ENCODE measurements at regions of chr12 and their contacts with region 1.

Region 1: DNA sequence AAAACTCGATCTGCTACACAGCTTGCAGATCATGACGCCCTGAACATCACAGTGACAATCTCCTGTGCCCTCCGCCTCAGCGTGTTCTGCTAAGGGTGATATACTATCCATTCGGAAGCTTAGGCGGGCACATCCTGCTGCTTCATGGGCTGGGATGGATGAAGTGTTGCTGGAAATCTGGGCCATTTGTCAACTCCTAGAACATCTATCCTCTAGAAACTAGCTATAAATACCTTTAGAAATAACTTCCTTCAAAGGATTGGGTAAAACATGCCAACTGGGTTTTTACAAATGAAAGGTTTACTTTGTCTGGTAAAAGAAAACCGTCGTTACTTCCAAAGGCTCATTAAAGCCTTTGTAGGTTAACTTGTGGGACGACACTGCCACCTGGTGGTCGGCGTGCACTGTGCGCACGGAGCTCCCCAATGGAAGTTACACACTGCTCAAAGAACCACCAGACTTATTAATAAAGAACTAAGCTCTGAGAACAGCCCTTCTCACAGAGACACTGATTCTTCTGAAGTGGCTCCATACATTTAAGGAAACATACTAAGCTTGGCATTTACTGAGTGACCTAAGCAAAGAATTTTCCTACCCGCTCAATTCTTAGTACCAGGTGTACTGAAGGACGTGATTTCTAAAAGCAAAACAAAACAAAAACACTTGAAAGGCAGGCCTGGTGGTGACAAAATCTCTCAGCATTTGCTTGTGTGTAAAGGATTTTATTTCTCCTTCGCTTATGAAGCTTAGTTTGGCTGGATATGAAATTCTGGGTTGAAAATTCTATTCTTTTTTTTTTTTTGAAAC is 21.6 kb upstream of the CACNA2D4 start:
- DNase-seq: peak; percentile 78
- ATAC-seq: peak; percentile 83
- H3K4me3 ChIP-seq: no peak overlapping the region
- H3K27ac ChIP-seq: no peak overlapping the region
- H3K4me1 ChIP-seq: peaks cover 12% of the 10 kb centered on the region
- H3K27me3 ChIP-seq: no peaks in the 10 kb centered on the region
- CTCF ChIP-seq: peak; percentile 97
- POLR2A ChIP-seq: no peak
- RAD21 ChIP-seq: peak; percentile 93

Region 2: DNA sequence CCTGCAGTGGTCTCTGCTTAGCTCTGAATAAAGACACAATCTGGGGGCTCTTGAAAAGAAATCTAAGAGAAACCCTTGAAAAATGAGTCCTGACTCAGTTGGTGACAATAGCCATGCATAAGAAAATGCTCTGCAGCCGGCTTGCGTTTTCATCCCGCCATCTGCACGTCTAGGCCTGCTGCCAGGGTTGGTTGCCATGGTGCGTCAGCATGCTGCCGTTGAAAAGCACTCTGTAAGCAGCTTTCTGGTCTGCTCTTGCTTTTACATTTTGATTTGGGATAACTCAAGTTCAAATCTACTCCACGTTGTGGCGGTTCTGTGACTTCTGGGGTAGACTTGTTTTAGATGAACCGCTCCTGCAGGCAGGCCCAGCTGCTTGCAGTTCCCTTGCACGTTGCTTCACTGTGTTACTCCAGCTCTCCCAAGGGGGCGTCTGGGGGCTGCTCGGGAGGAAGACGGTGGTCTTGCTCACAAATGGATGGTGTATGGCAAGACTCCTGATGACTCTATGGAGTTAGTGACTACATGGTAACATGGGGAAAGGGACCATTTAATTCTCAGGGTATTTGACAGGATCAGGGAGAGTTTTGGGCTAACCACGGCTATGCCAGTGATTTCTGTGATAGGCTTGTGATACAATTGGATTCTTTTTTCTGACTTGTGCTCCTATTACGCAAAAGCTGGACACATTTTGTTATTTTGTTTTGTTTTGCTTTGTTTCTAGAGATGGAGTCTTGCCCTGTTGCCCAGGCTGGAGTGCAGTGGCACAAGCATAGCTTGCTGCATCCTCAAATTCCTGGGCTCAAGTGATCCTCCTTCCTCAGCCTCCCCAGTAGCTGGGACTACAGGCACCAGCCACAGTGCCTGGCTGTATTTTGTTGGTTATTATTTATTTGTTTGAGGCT is 295.2 kb before region 1 on chr12:
- CTCF ChIA-PET with region 1: no interaction called
- POLR2A ChIA-PET with region 1: no interaction called
- dilution Hi-C with region 1: no loop called
- in situ Hi-C with region 1: loop called (anchors 5 kb)
- intact Hi-C with region 1: no loop called
- DNase-seq: peak; percentile 91
- ATAC-seq: peak; percentile 82
- H3K4me3 ChIP-seq: no peak overlapping the region
- H3K27ac ChIP-seq: no peak overlapping the region
- H3K4me1 ChIP-seq: peaks cover 10% of the 10 kb centered on the region
- H3K27me3 ChIP-seq: no peaks in the 10 kb centered on the region
- CTCF ChIP-seq: no peak
- POLR2A ChIP-seq: no peak
- RAD21 ChIP-seq: no peak

Region 3: DNA sequence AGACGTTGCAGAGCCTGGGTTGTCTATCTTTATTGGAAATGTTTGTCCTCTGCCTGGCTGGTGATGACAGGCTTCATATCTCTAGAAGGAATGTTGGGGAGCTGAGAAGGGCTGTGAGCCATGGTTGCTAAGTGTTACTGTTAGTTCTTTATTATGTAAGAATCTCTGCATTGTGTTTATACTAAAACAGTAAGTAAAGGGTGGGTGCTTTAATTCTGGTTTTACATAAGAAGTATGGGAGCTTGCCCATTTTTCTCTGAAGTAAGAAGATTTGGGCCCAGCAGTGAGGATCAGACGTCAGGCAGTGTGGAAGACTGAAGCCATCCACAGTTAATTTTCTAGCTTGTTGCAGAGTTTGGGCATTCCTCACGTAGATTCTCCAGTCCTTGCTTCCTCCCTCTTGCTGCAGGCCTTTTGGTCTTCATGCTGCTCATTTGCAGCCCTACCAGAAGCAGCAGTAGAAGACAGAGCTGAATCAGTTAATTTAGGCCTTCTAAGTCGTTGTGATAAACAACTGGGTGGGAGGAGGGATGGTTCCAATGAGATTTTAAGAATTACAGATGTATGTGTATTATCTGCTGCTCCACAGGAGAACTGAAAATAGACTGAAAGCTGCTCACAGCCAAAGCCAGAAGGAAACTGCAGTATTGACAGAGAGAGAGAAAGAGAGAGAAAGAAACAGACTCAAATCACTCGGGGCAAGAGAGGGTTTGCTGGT is 289.6 kb before region 1 on chr12:
- CTCF ChIA-PET with region 1: interaction called, 9 read pairs
- POLR2A ChIA-PET with region 1: no interaction called
- dilution Hi-C with region 1: no loop called
- in situ Hi-C with region 1: loop called (anchors 5 kb)
- intact Hi-C with region 1: loop called (anchors 2 kb)
- DNase-seq: peak; percentile 20
- ATAC-seq: peak; percentile 45; the same call in 1 of the 2 replicates
- H3K4me3 ChIP-seq: no peak overlapping the region
- H3K27ac ChIP-seq: no peak overlapping the region
- H3K4me1 ChIP-seq: peaks cover 4% of the 10 kb centered on the region
- H3K27me3 ChIP-seq: no peaks in the 10 kb centered on the region
- CTCF ChIP-seq: no peak
- POLR2A ChIP-seq: no peak
- RAD21 ChIP-seq: no peak

Region 4: DNA sequence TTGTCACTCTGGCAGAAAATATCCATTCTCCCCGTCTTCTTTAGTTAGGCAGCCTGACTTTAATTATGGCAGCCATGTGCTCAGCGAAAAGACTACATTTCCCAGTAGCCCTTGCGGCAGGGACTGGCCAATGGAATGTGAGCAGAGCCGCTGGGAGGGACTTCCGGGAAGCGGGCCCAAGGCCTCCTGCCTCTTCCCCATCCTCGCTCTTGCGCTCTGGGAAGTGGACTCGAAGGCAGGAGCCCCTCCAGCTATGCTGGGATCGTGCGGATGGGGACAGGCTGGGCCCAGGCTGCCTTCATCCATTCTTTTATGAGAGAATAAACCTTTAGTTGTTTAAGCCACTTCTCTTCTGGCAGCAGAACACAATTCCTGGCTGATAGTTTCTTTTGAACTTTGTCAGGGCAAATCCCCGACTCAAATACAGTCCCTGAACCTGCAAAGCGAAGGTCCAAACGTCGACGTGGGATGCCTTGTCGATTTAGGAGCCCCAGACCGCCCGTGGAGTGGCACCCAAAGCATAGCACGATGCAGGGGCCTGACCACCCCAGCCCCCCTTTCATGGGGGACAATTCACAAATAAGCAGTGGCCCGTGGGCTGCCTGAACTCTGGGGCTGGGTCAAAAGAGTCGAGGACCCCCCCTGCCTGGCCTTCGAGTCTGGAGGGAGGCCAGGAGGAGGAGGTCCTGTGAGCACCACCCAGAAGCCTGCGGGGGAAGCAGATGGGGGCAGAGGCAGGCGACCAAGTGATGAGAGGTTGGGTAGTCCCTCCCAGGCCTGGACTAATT is 135.3 kb before region 1 on chr12:
- CTCF ChIA-PET with region 1: interaction called, 7 read pairs
- POLR2A ChIA-PET with region 1: no interaction called
- dilution Hi-C with region 1: no loop called
- in situ Hi-C with region 1: no loop called
- intact Hi-C with region 1: loop called (anchors 1 kb)
- DNase-seq: peak; percentile 88
- ATAC-seq: peak; percentile 90
- H3K4me3 ChIP-seq: no peak overlapping the region
- H3K27ac ChIP-seq: peak overlapping the region; percentile 12; the same call in 1 of the 2 replicates
- H3K4me1 ChIP-seq: no peaks in the 10 kb centered on the region
- H3K27me3 ChIP-seq: no peaks in the 10 kb centered on the region
- CTCF ChIP-seq: no peak
- POLR2A ChIP-seq: no peak
- RAD21 ChIP-seq: no peak

Region 5: DNA sequence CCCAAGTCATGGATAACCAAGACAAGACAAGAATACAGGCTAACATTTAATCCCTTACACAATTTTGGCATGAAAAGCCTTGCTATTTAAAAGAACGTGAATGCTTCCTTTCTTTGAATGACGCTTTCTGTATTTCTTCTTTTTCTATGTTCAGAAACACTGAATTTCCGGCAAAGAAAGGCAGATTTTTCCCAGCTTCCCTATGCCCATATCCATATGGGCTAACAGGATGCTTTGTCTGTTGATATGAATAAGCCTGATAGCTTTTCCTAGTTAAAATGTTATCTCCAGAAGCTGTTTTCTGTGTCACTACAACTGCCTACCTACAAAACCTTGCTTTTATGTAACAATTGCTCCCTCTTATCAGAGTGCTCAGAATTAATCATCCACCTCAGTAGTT is 16.7 kb after region 1 on chr12:
- CTCF ChIA-PET with region 1: interaction called, 16 read pairs
- POLR2A ChIA-PET with region 1: no interaction called
- dilution Hi-C with region 1: no loop called
- in situ Hi-C with region 1: no loop called
- intact Hi-C with region 1: no loop called
- DNase-seq: no peak
- ATAC-seq: no peak
- H3K4me3 ChIP-seq: no peak overlapping the region
- H3K27ac ChIP-seq: no peak overlapping the region
- H3K4me1 ChIP-seq: no peaks in the 10 kb centered on the region
- H3K27me3 ChIP-seq: no peaks in the 10 kb centered on the region
- CTCF ChIP-seq: no peak
- POLR2A ChIP-seq: no peak
- RAD21 ChIP-seq: no peak